ENCODE measurements at regions of chr19 and their contacts with region 1.

Region 1: DNA sequence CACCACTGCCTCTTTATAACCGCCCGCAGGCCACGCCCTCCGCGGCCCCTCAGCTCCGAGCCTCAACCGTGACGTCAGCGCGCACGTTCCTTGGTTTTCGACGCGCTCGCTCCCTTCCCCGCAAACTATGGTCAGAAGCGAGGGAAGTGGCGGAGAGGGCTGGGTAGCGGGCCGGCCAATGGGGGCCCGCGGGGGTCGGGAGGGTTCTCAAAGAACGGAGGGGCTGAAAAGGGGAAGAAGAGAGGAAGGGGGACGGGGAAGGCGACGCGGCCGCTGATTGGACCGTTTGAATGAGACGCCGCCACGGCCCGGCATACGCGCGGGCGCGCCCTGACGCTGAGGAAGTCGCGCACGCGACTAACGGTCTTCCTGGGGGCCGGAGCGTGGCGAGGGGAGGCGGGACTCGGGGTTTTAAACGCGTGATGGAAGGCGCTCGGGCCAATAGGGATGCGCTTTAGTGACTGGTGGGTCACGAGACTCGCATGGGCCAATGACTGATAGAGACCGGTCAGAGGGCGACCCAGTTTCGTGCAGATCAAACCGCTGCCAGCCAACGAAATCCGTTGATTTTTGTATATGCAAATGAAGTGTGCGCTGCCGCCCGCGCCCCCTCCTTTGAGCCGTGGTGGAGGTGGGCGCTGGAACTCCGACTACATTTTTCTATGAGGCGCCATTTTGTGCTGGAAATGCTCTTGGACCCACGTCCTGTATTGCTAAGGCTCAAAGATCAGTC is 378 bp upstream of the UBE2S start:
- DNase-seq: peak; percentile 100
- H3K4me3 Mint-ChIP-seq: peak overlapping the region; percentile 94
- H3K27ac Mint-ChIP-seq: peak overlapping the region; percentile 99
- H3K4me1 Mint-ChIP-seq: peaks cover 21% of the 10 kb centered on the region
- H3K27me3 Mint-ChIP-seq: no peaks in the 10 kb centered on the region
- CTCF ChIP-seq: no peak

Region 2: GRCh38 chr19:55273978-55274707 is 133.8 kb before region 1 on chr19:
- CTCF ChIA-PET with region 1: no interaction called
- POLR2A ChIA-PET with region 1: no interaction called
- intact Hi-C with region 1: no loop called
- DNase-seq: no peak
- H3K4me3 Mint-ChIP-seq: no peak overlapping the region
- H3K27ac Mint-ChIP-seq: no peak overlapping the region
- H3K4me1 Mint-ChIP-seq: peaks cover 2% of the 10 kb centered on the region
- H3K27me3 Mint-ChIP-seq: no peaks in the 10 kb centered on the region
- CTCF ChIP-seq: no peak

Region 3: DNA sequence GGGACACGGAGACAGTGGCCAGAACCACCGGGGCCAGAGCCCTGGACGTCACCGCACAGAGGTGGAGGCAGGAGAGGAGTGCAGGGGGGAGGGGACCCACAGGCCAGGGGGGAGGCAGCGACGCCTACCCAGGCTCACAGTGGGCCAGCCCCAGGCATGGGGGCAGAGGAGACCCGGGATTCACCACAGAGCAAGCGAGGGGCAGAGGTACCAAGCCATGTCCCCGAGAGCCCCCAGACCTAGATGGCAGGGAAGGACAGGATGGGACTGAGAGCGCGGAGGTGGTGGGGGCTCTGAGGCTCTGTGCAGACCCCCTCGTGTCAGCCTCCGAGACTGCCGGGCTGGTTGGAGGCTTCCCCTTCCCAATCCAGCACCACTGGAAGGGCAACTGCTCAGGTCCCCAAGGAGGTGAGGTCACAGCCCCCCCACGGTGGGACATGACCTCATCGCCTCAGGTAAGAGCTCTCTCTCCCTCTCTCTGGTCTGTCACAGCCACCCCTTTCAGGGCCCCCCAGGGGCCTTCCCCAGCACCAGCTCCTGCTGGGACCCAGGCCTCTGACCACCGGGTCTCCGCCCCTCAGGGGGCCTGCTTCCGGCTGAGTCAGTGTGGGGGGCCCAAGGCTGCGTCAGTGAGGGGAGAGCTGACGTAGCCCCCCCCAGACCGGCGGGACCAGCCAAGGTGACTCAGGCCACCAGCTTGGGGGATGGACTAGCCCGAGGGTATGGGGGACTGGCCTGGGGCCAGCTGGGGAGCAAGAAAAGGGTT is 35.5 kb before region 1 on chr19:
- CTCF ChIA-PET with region 1: no interaction called
- POLR2A ChIA-PET with region 1: no interaction called
- intact Hi-C with region 1: no loop called
- DNase-seq: no peak
- H3K4me3 Mint-ChIP-seq: no peak overlapping the region
- H3K27ac Mint-ChIP-seq: no peak overlapping the region
- H3K4me1 Mint-ChIP-seq: peaks cover 27% of the 10 kb centered on the region
- H3K27me3 Mint-ChIP-seq: peaks cover 28% of the 10 kb centered on the region
- CTCF ChIP-seq: no peak

Region 4: DNA sequence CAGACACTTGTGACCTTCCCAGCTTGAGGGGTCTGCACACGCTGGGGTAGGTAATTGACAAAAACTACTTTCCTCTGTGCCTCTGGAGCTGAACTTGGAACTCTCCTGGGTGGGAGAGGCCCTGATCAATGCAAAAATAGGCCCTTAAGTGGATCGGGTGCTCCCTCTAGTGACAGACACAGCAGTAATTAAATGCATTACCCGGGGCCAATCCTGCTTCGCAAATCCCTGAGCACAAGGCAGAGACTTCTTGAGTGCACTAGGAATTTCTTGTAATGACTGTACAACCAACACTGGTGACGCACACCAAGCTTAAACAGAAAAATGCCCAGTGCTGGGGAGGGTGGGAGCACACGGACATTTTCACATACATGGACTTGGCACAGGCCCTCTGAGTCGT is 10.2 kb after region 1 on chr19:
- CTCF ChIA-PET with region 1: interaction called, 12 read pairs
- POLR2A ChIA-PET with region 1: interaction called, 3 read pairs
- intact Hi-C with region 1: no loop called
- DNase-seq: peak; percentile 86
- H3K4me3 Mint-ChIP-seq: no peak overlapping the region
- H3K27ac Mint-ChIP-seq: no peak overlapping the region
- H3K4me1 Mint-ChIP-seq: no peaks in the 10 kb centered on the region
- H3K27me3 Mint-ChIP-seq: no peaks in the 10 kb centered on the region
- CTCF ChIP-seq: peak; percentile 86

Measured in MCF 10A (cell line).